Activated CD4-positive, alpha-beta T cell treated with anti-CD3 and anti-CD28 coated beads, Interleukin-2, amount 10 ng/mL, durations not matched to agents 24 days and 14 days (primary cell): ENCODE measurements at regions of chr14 and their contacts with region 1.

Region 1: GRCh38 chr14:35140718-35141581 is 18.6 kb downstream of the PRORP start:
- DNase-seq: no peak
- H3K4me3 Mint-ChIP-seq: no peak overlapping the region
- H3K27ac Mint-ChIP-seq: no peak overlapping the region
- H3K4me1 Mint-ChIP-seq: peaks cover 19% of the 10 kb centered on the region
- H3K27me3 Mint-ChIP-seq: no peaks in the 10 kb centered on the region

Region 2: DNA sequence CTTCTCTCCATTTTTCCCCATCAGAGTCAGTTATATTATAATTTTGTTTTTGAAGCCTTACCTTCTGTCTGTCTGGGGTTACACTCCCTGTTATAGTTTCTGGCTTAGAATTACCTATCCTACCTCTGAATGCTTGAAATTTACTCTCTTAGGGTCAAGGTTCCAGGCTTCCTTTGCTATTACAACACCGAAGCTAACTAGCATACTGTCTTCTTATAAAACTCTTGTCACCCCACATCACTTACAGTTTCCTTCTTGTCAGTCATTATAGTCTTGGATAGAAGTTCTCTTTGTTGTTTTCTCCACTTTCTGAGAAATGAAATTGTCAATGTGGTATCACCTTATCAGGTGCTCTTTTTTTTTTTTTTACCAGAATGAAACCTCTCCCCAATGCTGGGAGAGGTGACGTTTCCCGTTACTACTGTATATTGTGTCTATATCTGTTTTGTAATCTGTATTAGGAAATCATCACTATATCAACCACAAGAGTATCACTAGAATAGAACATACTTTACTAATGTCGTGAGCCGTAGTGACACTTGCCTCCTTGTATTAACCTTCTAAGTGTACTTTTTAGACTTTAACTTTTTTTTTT is 82.0 kb after region 1 on chr14:
- intact Hi-C with region 1: loop called (anchors 5 kb)
- DNase-seq: no peak
- H3K4me3 Mint-ChIP-seq: no peak overlapping the region
- H3K27ac Mint-ChIP-seq: no peak overlapping the region
- H3K4me1 Mint-ChIP-seq: peaks cover 10% of the 10 kb centered on the region
- H3K27me3 Mint-ChIP-seq: no peaks in the 10 kb centered on the region